ENCODE measurements at regions of chr12 and their contacts with region 1.

Region 1: DNA sequence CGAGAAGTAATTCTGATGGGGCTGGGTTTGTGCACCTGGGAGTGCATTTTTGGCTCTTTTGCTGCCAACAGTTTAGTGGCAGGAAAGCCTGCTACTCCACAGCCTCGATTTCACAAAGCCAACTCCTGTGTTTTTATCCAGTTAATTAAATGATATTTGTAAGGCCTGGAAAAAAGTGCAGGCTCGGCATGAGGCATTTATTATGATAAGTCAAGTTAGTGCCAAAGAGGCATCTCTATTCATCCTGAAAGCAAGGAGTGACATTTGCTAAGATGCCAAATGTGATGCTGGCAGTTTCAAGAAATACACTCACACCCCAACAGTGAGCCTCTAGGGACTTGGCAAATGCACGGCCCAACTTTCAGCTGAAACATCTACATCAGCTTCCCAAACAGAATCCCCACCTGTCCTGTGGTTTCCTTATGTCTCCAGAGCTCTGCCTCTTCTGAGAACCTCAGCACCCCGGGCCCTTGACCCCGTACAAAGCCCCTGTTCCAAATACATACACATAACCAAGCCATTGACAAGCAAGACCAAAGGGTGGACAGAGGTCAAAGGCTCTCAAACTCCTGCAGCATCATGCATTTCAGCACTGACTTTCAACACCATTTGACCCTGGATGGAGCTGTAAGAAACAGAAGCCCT is 955.1 kb upstream of the TMEM132C start:
- DNase-seq: no peak

Region 2: GRCh38 chr12:125381373-125381772 is 1930.5 kb before region 1 on chr12:
- intact Hi-C with region 1: loop called in 1 of 2 experiments (anchors 5 kb)
- DNase-seq: no peak

Region 3: GRCh38 chr12:125841332-125841731 is 1470.5 kb before region 1 on chr12:
- intact Hi-C with region 1: no loop called
- DNase-seq: no peak

Region 4: DNA sequence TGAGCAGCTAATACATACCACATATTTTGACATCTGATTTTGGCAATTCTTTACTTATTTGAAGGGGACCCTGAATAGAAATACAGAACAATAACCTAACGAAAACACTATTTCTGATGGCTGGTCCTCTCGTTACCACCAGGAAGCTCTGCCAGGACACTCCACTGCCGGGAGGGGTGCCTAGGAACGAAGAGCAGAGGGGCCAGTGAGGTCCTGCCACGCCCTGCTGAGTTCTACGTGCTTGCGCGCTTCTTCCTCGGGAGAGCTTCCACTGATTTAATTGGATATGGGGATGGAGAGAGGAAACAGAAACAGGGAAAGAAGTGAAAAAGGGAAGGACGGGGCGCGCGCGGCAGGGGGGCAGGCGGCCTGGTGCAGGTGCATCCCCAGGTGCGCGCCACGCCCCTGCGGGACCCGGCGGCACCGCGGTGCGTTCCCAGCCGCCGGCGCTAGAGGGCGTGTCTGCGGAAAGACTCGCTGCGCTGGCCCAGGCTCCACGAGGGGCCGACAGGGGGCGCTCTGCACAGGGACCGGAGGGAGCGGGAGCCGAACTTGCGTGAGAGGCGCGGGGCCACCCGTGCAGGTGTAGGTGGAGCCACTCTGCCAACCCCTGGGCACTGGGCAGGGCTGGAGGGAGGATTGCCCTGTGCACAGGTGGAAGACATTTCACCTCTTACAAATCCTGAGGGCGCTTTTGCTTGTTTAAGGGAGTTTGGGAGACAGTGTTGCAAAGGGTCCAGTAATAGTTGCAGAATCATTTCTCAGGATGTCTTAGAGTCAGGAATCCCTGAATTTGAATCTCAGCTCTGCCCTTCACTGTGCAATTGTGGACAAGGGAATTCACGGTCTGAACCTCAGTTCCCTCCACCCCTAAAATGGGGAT is 31.2 kb before region 1 on chr12:
- intact Hi-C with region 1: no loop called
- DNase-seq: peak; percentile 85

Region 5: GRCh38 chr12:127381048-127381668 is 69.3 kb after region 1 on chr12:
- intact Hi-C with region 1: no loop called
- DNase-seq: no peak

Region 6: DNA sequence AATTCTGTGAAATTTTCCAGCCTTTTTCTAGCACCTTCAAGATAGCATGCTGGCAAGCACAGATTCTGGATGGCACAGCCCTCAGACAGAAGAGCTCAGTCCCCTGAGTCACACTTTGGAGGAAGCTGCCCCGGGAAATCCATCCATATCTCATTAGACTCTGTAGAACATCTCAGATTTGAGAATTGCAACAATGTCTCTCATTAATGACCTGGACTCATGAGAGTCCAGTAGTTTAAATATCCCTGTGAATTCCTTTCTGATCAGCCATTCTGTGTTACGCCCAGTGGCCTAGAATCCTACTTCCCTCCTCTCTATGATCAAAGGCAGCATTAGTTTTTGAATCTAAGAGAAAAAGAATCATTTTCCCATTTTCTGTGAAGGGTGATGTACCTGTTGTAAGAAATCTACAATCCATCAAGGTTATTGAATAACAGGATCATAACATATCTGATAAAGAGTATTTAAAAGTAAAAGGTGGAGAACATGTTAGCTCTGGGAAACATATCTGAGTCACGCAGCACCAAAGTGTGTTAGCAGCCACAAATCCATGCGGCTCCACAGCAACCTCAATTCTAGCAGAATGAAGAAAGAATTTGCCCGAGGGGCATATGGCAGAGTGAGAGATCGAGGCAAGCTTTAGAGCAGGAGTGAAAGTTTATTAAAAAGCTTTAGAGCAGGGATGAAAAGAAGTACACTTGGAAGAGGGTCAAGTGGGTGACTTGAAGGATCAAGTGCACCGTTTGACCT is 99.5 kb after region 1 on chr12:
- intact Hi-C with region 1: no loop called
- DNase-seq: no peak

Measured in posterior vena cava (tissue), 2 donors.